ENCODE measurements at regions of chr16 and their contacts with region 1.

Region 1: DNA sequence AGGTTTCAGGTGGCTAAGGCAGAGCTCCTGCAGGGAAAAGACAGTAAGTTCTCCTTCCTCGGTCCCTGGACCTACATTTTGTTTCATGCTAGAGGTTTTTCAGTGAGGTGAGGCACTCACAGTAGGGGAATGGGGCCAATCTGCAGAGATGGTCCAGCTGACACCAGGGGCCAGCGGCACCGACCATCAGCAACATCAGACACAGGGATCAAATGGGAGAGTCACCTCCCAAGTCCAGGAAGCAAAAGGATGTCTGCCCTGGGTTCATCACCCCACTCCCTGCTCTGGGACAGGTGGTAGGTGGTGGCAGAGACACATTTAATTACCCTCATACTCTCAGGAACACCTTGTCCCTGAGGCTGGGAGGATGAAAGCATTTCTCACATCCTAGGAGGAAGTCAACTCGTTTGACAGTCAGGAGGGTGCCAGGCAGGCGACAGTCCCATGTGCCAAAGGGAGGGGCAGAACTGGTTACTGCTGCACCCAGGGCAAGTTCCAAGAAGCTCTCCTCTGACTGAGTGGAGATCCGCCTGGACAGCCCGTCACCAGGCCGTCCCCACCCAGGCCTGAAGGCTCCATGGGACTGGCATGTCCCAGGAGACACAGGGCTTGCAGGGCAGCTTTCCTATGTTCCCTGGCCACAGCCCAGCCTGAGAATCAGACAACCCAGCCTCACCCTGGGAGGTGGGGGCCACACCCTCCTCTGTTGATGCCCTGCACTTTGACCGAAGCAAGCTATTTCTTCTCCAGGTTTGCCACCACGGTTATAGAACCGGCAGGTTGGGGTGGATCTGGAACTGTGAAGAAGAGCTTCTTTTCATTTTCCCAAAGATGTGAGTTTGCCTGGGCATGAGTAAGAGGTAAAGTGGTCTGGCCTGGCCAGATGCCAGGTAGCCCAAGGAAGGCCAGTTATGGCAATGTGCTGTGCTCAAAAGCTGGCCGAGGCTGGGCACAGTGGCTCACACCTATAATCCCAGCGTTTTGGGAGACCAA is 19.1 kb downstream of the ATP6V0D1 start:
- DNase-seq: no peak
- H3K4me3 ChIP-seq: no peak overlapping the region
- H3K27ac ChIP-seq: peak overlapping the region; percentile 77 to 82
- H3K4me1 ChIP-seq: peaks cover 37 to 51% of the 10 kb centered on the region in 2 donors
- H3K27me3 ChIP-seq: no peaks in the 10 kb centered on the region
- CTCF ChIP-seq: no peak
- POLR2A ChIP-seq: no peak

Region 2: GRCh38 chr16:67428146-67428731 is 33.7 kb before region 1 on chr16:
- intact Hi-C with region 1: loop called (anchors 5 kb)
- DNase-seq: peak; percentile 82 to 83
- H3K4me3 ChIP-seq: no peak overlapping the region
- H3K27ac ChIP-seq: peak overlapping the region; percentile 5 to 48
- H3K4me1 ChIP-seq: peaks cover 0 to 21% of the 10 kb centered on the region in 2 donors
- H3K27me3 ChIP-seq: no peaks in the 10 kb centered on the region
- CTCF ChIP-seq: peak; percentile 92 to 93 (median 92)
- POLR2A ChIP-seq: no peak

Region 3: GRCh38 chr16:67504041-67505021 is 42.4 kb after region 1 on chr16:
- intact Hi-C with region 1: no loop called
- DNase-seq: no peak
- H3K4me3 ChIP-seq: no peak overlapping the region
- H3K27ac ChIP-seq: peak overlapping the region in 1 of 2 donors; percentile 49
- H3K4me1 ChIP-seq: no peaks in the 10 kb centered on the region
- H3K27me3 ChIP-seq: no peaks in the 10 kb centered on the region
- CTCF ChIP-seq: no peak
- POLR2A ChIP-seq: no peak

Measured in uterus (tissue), 4 donors.